Head of caudate nucleus (tissue), 42 donors: ENCODE measurements at regions of chr18 and their contacts with region 1.

Region 1: GRCh38 chr18:51287823-51288508 is 90.5 kb upstream of the MEX3C start:
- DNase-seq: no peak

Region 2: GRCh38 chr18:51480407-51481261 is 192.7 kb after region 1 on chr18:
- intact Hi-C with region 1: no loop called
- DNase-seq: peak in 4 of 42 donors; percentile 14 to 28 (median 24)

Region 3: GRCh38 chr18:51537487-51537886 is 249.5 kb after region 1 on chr18:
- intact Hi-C with region 1: loop called (anchors 10 kb)
- DNase-seq: peak in 41 of 42 donors; percentile 36 to 86 (median 64)